IMR-90 (cell line): ENCODE measurements at regions of chr5 and their contacts with region 1.

Region 1: DNA sequence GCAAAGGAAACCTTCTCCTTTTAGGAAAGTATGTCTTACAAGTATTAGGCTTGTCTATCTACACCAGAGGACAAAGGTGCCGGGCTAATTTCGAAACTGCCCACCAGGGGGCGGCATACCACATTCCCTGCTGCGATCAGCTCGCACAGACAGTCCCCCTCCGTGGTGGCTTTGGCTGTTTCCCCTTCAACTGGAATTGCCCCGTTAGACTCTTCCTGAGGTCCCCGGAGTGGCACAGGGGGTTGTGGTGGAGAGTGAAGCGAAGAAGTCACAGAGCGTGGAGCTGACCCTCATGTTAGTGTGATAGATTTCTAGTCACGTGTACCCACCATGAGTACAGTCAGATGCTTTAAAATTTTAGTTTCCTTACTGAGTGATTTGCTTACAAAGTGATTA is 17.5 kb downstream of the PTTG1 start:
- DNase-seq: peak; percentile 64
- ATAC-seq: peak; percentile 88
- H3K4me3 ChIP-seq: peak overlapping the region; percentile 64
- H3K27ac ChIP-seq: no peak overlapping the region
- H3K4me1 ChIP-seq: peaks cover 3% of the 10 kb centered on the region; the same call in 1 of the 2 replicates
- H3K27me3 ChIP-seq: no peaks in the 10 kb centered on the region
- CTCF ChIP-seq: peak; percentile 85
- POLR2A ChIP-seq: no peak
- RAD21 ChIP-seq: peak; percentile 70

Region 2: GRCh38 chr5:160419458-160420330 is 19.5 kb before region 1 on chr5:
- CTCF ChIA-PET with region 1: interaction called, 21 read pairs
- POLR2A ChIA-PET with region 1: no interaction called
- dilution Hi-C with region 1: no loop called
- in situ Hi-C with region 1: no loop called
- intact Hi-C with region 1: no loop called
- DNase-seq: no peak
- ATAC-seq: peak; percentile 2
- H3K4me3 ChIP-seq: peak overlapping the region; percentile 87
- H3K27ac ChIP-seq: no peak overlapping the region; the same call in 1 of the 2 replicates
- H3K4me1 ChIP-seq: peaks cover 7% of the 10 kb centered on the region
- H3K27me3 ChIP-seq: no peaks in the 10 kb centered on the region
- CTCF ChIP-seq: no peak
- POLR2A ChIP-seq: no peak
- RAD21 ChIP-seq: no peak

Region 3: GRCh38 chr5:160427607-160428006 is 11.6 kb before region 1 on chr5:
- CTCF ChIA-PET with region 1: interaction called, 21 read pairs
- POLR2A ChIA-PET with region 1: no interaction called
- dilution Hi-C with region 1: no loop called
- in situ Hi-C with region 1: no loop called
- intact Hi-C with region 1: no loop called
- DNase-seq: no peak
- ATAC-seq: no peak
- H3K4me3 ChIP-seq: no peak overlapping the region
- H3K27ac ChIP-seq: no peak overlapping the region
- H3K4me1 ChIP-seq: peaks cover 4% of the 10 kb centered on the region
- H3K27me3 ChIP-seq: no peaks in the 10 kb centered on the region
- CTCF ChIP-seq: no peak
- POLR2A ChIP-seq: no peak
- RAD21 ChIP-seq: no peak

Region 4: GRCh38 chr5:160467555-160468362 is 28.6 kb after region 1 on chr5:
- CTCF ChIA-PET with region 1: interaction called, 14 read pairs
- POLR2A ChIA-PET with region 1: no interaction called
- dilution Hi-C with region 1: no loop called
- in situ Hi-C with region 1: no loop called
- intact Hi-C with region 1: no loop called
- DNase-seq: peak; percentile 87
- ATAC-seq: peak; percentile 66
- H3K4me3 ChIP-seq: no peak overlapping the region
- H3K27ac ChIP-seq: no peak overlapping the region
- H3K4me1 ChIP-seq: peaks cover 14% of the 10 kb centered on the region
- H3K27me3 ChIP-seq: peaks cover 2% of the 10 kb centered on the region; the same call in 1 of the 2 replicates
- CTCF ChIP-seq: no peak
- POLR2A ChIP-seq: no peak
- RAD21 ChIP-seq: no peak

Region 5: GRCh38 chr5:160508780-160509361 is 69.7 kb after region 1 on chr5:
- CTCF ChIA-PET with region 1: interaction called, 16 read pairs
- POLR2A ChIA-PET with region 1: no interaction called
- dilution Hi-C with region 1: no loop called
- in situ Hi-C with region 1: no loop called
- intact Hi-C with region 1: loop called (anchors 1 kb)
- DNase-seq: peak; percentile 83
- ATAC-seq: peak; percentile 97
- H3K4me3 ChIP-seq: no peak overlapping the region
- H3K27ac ChIP-seq: no peak overlapping the region
- H3K4me1 ChIP-seq: peaks cover 2% of the 10 kb centered on the region; the same call in 1 of the 2 replicates
- H3K27me3 ChIP-seq: peaks cover 4% of the 10 kb centered on the region
- CTCF ChIP-seq: peak; percentile 86
- POLR2A ChIP-seq: no peak
- RAD21 ChIP-seq: peak; percentile 91

Region 6: GRCh38 chr5:161544350-161544765 is 1105.2 kb after region 1 on chr5:
- CTCF ChIA-PET with region 1: no interaction called
- POLR2A ChIA-PET with region 1: no interaction called
- dilution Hi-C with region 1: no loop called
- in situ Hi-C with region 1: no loop called
- intact Hi-C with region 1: loop called (anchors 10 kb)
- DNase-seq: peak; percentile 4
- ATAC-seq: 0 out of 2 replicates have a peak, but pooled peaks have one; percentile 48
- H3K4me3 ChIP-seq: no peak overlapping the region
- H3K27ac ChIP-seq: no peak overlapping the region
- H3K4me1 ChIP-seq: no peaks in the 10 kb centered on the region
- H3K27me3 ChIP-seq: no peaks in the 10 kb centered on the region; the same call in 1 of the 2 replicates
- CTCF ChIP-seq: peak; percentile 43
- POLR2A ChIP-seq: no peak
- RAD21 ChIP-seq: peak; percentile 13; the same call in 1 of the 2 replicates